Sigmoid colon (tissue), 7 donors: ENCODE measurements at regions of chr5 and their contacts with region 1.

Region 1: GRCh38 chr5:55534436-55535198 is at the start of gene PLPP1:
- DNase-seq: peak; percentile 97
- H3K4me3 ChIP-seq: peak within 1 kb of the TSS; percentile 63 to 96 (median 85)
- H3K27ac ChIP-seq: peak within 1 kb of the TSS; percentile 93 to 99 (median 98)
- H3K4me1 ChIP-seq: peaks cover 0 to 41% (median 26%) of the 10 kb centered on the region in 4 donors
- H3K27me3 ChIP-seq: no peaks in the 10 kb centered on the region
- CTCF ChIP-seq: no peak
- EP300 ChIP-seq: peak in 1 of 4 donors; percentile 2
- POLR2A ChIP-seq: peak; percentile 23 to 62
- total RNA-seq, gene PLPP1: 264 to 355 (median 310) TPM

Region 2: DNA sequence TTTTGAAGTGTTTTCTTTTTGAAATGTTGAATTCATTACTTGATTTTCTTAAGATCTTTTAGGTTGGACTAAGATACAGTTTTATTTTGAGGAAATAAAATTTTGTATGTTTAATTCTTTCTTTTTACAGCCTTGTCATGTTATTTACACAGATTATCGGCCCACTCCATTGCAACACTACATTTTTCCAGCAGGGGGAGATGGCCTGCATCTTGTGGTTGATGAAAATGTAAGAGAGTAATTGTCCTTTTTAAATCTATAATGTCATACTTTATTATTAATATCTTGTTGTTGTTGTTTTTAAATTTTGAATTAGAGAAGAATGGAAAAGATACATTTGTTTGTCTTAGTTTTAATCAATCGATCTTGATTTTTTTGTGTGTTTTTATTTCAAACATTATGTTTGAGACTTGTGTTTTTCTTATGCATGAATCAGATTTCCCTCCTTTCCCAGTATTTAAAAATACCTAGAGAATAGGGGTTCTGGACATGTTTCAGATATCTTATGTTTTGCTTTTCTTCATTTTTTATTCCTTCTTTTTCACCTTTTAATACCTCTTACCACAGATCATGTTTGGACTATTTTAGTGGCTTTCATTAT is 190.1 kb before region 1 on chr5:
- intact Hi-C with region 1: loop called (anchors 10 kb)
- DNase-seq: peak; percentile 69
- H3K4me3 ChIP-seq: no peak overlapping the region
- H3K27ac ChIP-seq: peak overlapping the region in 3 of 4 donors; percentile 13 to 36 (median 17)
- H3K4me1 ChIP-seq: peaks cover 0 to 26% (median 16%) of the 10 kb centered on the region in 4 donors
- H3K27me3 ChIP-seq: no peaks in the 10 kb centered on the region
- CTCF ChIP-seq: peak in 3 of 4 experiments; percentile 86 to 90 (median 88)
- EP300 ChIP-seq: no peak
- POLR2A ChIP-seq: no peak

Region 3: GRCh38 chr5:55407059-55407684 is 127.4 kb before region 1 on chr5:
- intact Hi-C with region 1: loop called (anchors 5 kb)
- DNase-seq: no peak
- H3K4me3 ChIP-seq: no peak overlapping the region
- H3K27ac ChIP-seq: no peak overlapping the region
- H3K4me1 ChIP-seq: peaks cover 0 to 7% (median 3%) of the 10 kb centered on the region in 4 donors
- H3K27me3 ChIP-seq: no peaks in the 10 kb centered on the region
- CTCF ChIP-seq: peak; percentile 59 to 78 (median 62)
- EP300 ChIP-seq: no peak
- POLR2A ChIP-seq: no peak

Region 4: DNA sequence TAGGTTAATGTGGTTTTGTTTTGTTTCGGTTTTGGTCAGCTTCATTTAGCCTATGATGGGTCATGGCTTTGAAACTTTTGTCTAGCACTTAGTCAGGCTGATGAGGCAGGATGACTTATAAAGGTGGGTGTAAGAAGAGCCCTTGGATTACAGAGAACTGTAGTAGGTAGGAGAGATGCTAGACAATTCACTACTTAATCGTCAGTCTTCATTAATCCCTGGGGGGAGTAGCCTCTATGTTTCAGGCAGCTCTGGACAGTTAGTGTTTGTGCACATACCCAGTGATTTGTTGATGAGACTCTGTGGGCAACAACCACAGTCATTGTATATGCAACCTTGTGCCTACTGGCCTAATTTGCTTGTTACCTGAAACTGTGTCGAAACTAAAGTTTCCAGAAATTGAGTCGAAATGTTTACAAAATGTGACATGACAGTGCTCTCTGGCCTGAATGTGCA is 113.5 kb before region 1 on chr5:
- intact Hi-C with region 1: loop called (anchors 5 kb)
- DNase-seq: no peak
- H3K4me3 ChIP-seq: no peak overlapping the region
- H3K27ac ChIP-seq: peak overlapping the region; percentile 2 to 70 (median 62)
- H3K4me1 ChIP-seq: peaks cover 0 to 63% (median 46%) of the 10 kb centered on the region in 4 donors
- H3K27me3 ChIP-seq: no peaks in the 10 kb centered on the region
- CTCF ChIP-seq: no peak
- EP300 ChIP-seq: no peak
- POLR2A ChIP-seq: no peak

Region 5: DNA sequence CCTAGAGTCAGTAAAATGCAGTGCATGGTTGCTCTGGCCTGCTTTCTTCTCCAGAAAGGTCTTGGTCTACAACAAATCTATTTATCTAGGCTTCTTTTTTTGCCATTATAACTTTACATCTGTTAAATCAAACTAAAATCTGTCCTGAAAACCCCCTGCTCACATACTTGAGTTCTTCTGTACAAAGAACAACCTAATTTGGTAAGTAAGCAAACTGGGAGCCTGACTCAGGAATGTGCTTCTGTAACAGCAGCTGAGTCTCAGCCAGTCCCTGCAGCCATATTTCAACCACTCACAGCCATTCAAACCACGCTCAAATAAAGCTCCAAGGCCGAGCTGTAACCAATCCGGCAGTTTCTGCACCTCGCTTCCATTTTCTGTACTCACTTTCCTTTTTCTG is 95.6 kb before region 1 on chr5:
- intact Hi-C with region 1: loop called (anchors 5 kb)
- DNase-seq: peak; percentile 87
- H3K4me3 ChIP-seq: no peak overlapping the region
- H3K27ac ChIP-seq: peak overlapping the region; percentile 80 to 92 (median 85)
- H3K4me1 ChIP-seq: peaks cover 0 to 88% (median 79%) of the 10 kb centered on the region in 4 donors
- H3K27me3 ChIP-seq: no peaks in the 10 kb centered on the region
- CTCF ChIP-seq: no peak
- EP300 ChIP-seq: peak in 2 of 4 donors; percentile 45 to 55
- POLR2A ChIP-seq: no peak

Region 6: GRCh38 chr5:55492449-55492848 is 42.2 kb before region 1 on chr5:
- intact Hi-C with region 1: no loop called
- DNase-seq: no peak
- H3K4me3 ChIP-seq: no peak overlapping the region
- H3K27ac ChIP-seq: no peak overlapping the region
- H3K4me1 ChIP-seq: peaks cover 0 to 39% (median 27%) of the 10 kb centered on the region in 4 donors
- H3K27me3 ChIP-seq: no peaks in the 10 kb centered on the region
- CTCF ChIP-seq: no peak
- EP300 ChIP-seq: no peak
- POLR2A ChIP-seq: no peak

Region 7: DNA sequence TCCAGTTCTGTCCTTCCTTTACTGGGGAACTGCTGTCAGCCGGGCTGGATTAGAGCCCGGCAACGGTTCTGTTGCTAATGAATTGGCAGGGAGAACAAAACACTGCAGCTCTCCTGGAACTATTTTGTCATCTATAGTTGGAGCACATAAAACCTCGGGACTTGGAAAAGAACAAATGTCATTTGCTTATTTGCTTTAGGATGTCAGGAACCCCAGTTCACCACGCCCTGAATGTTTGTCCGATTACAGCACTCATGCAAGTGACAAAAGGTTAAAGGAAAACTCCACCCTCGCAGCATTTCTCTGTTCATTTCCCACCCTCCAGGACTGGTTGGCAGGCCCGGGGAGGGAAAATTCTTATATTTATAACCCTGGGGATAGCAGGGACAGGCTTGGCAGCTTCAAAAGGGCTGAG is 66.6 kb after region 1 on chr5:
- intact Hi-C with region 1: loop called (anchors 1 kb)
- DNase-seq: peak; percentile 95
- H3K4me3 ChIP-seq: peak overlapping the region in 2 of 4 donors; percentile 19
- H3K27ac ChIP-seq: peak overlapping the region; percentile 76 to 93 (median 88)
- H3K4me1 ChIP-seq: peaks cover 0 to 80% (median 78%) of the 10 kb centered on the region in 4 donors
- H3K27me3 ChIP-seq: no peaks in the 10 kb centered on the region
- CTCF ChIP-seq: no peak
- EP300 ChIP-seq: peak in 3 of 4 donors; percentile 39 to 90 (median 63)
- POLR2A ChIP-seq: no peak

Region 8: DNA sequence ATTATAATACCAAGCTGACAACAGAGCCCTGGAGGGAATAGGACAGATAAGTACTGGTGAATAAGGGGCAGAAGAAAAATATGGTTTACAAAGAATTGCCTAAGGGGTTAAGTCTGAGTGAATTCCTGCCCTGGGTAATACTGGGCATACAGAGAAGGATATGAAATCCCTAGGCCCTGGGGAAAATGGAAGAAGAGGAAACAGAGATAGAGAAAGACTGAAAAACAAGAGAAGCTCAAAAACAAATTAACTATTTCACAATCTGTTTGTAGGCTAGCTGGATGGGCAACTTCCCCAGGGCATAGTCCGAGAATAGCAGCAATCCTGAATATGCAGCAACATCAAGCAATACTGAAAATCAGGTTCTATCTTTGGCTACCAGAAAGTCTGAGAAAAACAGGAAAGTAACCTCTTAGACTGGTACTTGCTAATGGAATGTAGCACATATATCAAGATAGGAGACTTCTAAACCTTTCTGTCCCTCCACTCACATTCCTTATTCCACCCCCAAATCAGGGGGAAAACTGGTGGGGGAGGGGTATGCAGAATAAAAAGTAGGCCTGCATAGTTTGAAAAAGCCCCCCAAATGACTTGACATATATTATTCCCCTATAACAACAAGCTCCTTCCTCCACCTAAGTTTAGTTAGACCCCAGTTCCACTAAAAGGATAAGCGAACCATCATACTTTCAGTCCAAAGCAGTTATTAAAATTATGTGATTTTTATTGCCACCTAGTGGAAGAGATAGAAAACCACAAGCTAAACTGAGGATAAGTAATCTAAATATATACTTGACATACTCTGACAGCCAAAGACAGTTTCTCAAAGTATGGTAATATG is 156.9 kb after region 1 on chr5:
- intact Hi-C with region 1: loop called (anchors 2 kb)
- DNase-seq: no peak
- H3K4me3 ChIP-seq: peak overlapping the region in 2 of 4 donors; percentile 2 to 8
- H3K27ac ChIP-seq: peak overlapping the region in 3 of 4 donors; percentile 43 to 71 (median 70)
- H3K4me1 ChIP-seq: peaks cover 0 to 29% (median 24%) of the 10 kb centered on the region in 4 donors
- H3K27me3 ChIP-seq: no peaks in the 10 kb centered on the region
- CTCF ChIP-seq: peak; percentile 57 to 67 (median 66)
- EP300 ChIP-seq: no peak
- POLR2A ChIP-seq: no peak

Region 9: DNA sequence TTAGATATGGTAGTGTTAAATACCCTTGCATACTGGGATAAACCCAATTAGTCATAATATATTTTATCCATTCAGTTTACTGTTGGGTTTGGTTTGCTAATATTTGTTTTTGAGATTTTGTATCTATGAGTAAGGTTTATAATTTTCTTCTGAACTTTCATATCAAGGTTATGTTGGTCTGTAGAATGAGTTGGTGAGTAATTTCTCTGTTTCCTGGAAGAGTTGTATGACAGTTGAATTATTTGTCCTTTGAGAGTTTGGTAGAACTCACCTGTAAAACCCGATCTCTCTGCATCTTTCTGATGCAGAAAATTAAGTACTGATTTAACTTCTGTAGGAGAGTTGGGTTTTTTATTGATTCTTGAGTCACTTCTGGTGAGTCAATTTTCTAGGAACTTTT is 223.6 kb after region 1 on chr5:
- intact Hi-C with region 1: no loop called
- DNase-seq: no peak
- H3K4me3 ChIP-seq: no peak overlapping the region
- H3K27ac ChIP-seq: no peak overlapping the region
- H3K4me1 ChIP-seq: no peaks in the 10 kb centered on the region
- H3K27me3 ChIP-seq: no peaks in the 10 kb centered on the region
- CTCF ChIP-seq: no peak
- EP300 ChIP-seq: no peak
- POLR2A ChIP-seq: no peak